ENCODE measurements at regions of chr16 and their contacts with region 1.

Region 1: DNA sequence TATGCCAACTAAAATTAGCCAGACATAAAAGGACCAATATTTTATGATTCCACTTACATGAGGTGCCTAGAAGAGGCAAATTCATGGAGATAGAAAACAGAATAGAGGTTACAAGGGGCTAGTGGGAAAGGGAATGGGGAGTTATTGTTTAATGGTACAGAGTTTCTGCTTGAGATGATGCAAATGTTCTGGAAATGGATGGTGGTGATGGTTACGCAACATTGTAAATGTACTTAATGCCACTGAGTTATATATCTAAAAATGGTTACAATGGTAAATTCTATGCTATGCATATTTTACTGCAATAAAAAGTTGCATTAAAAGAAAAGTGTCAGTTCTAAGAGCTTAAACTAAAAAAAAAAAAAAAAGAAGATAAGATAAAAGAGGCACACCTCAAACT is 17.9 kb downstream of the MT1X start:
- DNase-seq: no peak
- H3K4me3 Mint-ChIP-seq: no peak overlapping the region
- H3K27ac Mint-ChIP-seq: no peak overlapping the region
- H3K4me1 Mint-ChIP-seq: peaks cover 7% of the 10 kb centered on the region
- H3K27me3 Mint-ChIP-seq: no peaks in the 10 kb centered on the region

Region 2: DNA sequence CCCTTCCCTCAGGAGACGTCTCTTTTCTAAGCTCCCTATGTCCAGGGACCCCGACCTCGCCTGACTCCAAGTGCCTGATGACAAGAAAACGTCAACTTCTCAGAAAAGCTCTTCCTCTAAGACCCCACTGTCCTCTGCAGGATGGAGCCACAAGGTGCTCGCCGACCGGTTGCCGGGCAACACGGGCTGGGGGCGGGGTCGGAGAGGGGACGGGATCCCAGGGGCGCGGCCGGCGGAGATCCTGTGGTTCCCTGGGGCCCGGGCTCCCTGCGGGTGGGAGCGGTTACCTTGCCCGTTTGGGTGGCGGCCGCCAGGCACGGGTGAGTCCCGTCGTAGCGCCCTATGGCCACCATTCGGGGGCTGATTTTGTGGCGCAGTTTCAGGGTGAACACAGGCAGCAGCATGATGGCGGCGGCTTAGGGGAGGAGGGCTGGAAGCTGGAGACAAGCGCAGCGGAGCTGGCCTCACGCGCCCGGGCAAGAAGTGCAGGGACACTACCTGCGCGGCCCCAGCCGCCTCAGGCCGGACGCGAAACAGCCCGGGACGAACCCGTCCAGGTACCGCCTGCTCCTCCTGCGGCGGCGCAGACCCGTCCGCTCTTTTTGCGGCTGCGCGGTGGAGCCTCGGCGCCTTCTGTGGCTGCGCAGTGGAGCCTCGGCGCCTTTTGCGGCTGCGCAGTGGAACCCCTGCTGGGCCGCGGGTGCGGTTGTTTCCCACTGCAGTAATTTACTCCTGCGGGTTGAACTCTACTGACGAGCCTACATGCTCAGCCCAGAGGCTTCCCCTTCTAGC is 180.5 kb before region 1 on chr16 and contains the start of gene BBS2:
- CTCF ChIA-PET with region 1: interaction called, 34 read pairs
- POLR2A ChIA-PET with region 1: no interaction called
- intact Hi-C with region 1: loop called (anchors 1 kb)
- DNase-seq: peak; percentile 93
- H3K4me3 Mint-ChIP-seq: peak within 1 kb of the TSS; percentile 79
- H3K27ac Mint-ChIP-seq: peak within 1 kb of the TSS; percentile 80
- H3K4me1 Mint-ChIP-seq: peaks cover 40% of the 10 kb centered on the region
- H3K27me3 Mint-ChIP-seq: no peaks in the 10 kb centered on the region
- total RNA-seq, gene BBS2: 21.5 to 22.6 TPM

Region 3: GRCh38 chr16:56569801-56570370 is 130.3 kb before region 1 on chr16:
- CTCF ChIA-PET with region 1: interaction called, 140 read pairs
- POLR2A ChIA-PET with region 1: no interaction called
- intact Hi-C with region 1: no loop called
- DNase-seq: no peak
- H3K4me3 Mint-ChIP-seq: no peak overlapping the region
- H3K27ac Mint-ChIP-seq: no peak overlapping the region
- H3K4me1 Mint-ChIP-seq: no peaks in the 10 kb centered on the region
- H3K27me3 Mint-ChIP-seq: no peaks in the 10 kb centered on the region

Region 4: DNA sequence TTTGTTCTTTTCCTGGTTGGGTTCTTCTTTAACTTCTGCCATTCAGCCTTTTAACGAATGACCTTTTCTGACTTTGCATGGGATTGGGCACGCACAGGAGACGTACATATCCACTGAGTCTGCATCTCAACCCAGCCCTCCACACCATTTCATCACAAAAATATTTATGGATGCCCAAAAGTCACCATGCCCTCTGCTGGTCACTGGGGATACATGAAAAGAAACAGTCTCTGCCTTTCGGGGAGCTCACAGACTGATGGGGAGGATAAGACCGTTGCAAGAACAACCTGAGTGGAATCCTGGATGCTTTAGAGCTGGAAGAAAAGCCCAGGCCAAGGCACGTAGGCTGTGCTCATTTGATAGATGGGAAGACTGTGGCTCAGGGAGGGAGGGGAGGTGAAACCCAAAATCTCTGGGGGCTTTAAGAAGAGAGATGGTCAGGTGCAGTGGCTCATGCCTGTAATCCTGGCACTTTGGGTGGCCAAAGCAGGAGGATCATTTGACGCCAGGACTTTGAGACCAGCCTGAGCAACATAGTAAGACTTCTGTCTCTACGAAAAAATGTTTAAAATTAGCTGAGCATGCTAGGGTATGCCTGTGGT is 99.7 kb before region 1 on chr16:
- CTCF ChIA-PET with region 1: interaction called, 22 read pairs
- POLR2A ChIA-PET with region 1: interaction called, 4 read pairs
- intact Hi-C with region 1: loop called (anchors 1 kb)
- DNase-seq: peak; percentile 37
- H3K4me3 Mint-ChIP-seq: no peak overlapping the region
- H3K27ac Mint-ChIP-seq: no peak overlapping the region
- H3K4me1 Mint-ChIP-seq: peaks cover 9% of the 10 kb centered on the region
- H3K27me3 Mint-ChIP-seq: peaks cover 6% of the 10 kb centered on the region

Region 5: DNA sequence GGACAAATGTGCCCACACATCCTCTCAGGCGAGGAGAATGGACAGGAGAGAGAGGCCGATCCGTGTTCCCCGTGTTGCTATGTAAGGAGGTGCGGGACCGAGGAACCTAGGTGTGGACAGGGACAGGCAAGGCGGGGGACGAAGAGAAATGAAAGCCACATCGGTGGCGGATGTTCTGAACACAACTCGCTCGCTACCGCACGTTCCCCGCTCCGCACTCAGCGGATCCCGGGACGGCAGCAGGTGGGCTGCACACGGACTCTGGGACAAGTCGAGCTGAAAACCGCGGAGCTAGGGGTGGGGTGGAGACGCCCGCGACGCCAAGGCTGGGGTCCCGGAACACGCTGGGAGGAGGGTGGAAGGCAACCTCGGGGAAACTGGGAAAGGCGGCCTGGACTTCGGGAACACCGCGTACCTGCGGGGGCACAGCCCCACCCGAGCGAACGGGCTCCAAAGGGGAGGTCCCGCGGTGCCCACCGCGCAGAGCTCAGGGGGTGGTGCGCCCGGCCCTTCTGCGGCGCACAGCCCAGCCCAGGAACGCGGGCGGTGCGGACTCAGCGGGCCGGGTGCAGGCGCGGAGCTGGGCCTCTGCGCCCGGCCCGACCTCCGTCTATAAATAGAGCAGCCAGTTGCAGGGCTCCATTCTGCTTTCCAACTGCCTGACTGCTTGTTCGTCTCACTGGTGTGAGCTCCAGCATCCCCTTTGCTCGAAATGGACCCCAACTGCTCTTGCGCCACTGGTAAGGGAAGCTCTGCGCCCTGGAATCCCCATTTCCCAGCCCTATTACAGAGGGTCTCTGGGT is 74.9 kb before region 1 on chr16 and contains the start of gene MT1E:
- CTCF ChIA-PET with region 1: interaction called, 11 read pairs
- POLR2A ChIA-PET with region 1: no interaction called
- intact Hi-C with region 1: no loop called
- DNase-seq: peak; percentile 62
- H3K4me3 Mint-ChIP-seq: peak within 1 kb of the TSS; percentile 78
- H3K27ac Mint-ChIP-seq: no peak within 1 kb of the TSS
- H3K4me1 Mint-ChIP-seq: peaks cover 12% of the 10 kb centered on the region
- H3K27me3 Mint-ChIP-seq: peaks cover 21% of the 10 kb centered on the region
- total RNA-seq, gene MT1E: 4.4 to 4.8 TPM

Region 6: GRCh38 chr16:56673921-56674320 is 26.3 kb before region 1 on chr16:
- CTCF ChIA-PET with region 1: interaction called, 16 read pairs
- POLR2A ChIA-PET with region 1: no interaction called
- intact Hi-C with region 1: loop called (anchors 1 kb)
- DNase-seq: peak; percentile 50
- H3K4me3 Mint-ChIP-seq: no peak overlapping the region
- H3K27ac Mint-ChIP-seq: no peak overlapping the region
- H3K4me1 Mint-ChIP-seq: peaks cover 18% of the 10 kb centered on the region
- H3K27me3 Mint-ChIP-seq: peaks cover 39% of the 10 kb centered on the region

Region 7: DNA sequence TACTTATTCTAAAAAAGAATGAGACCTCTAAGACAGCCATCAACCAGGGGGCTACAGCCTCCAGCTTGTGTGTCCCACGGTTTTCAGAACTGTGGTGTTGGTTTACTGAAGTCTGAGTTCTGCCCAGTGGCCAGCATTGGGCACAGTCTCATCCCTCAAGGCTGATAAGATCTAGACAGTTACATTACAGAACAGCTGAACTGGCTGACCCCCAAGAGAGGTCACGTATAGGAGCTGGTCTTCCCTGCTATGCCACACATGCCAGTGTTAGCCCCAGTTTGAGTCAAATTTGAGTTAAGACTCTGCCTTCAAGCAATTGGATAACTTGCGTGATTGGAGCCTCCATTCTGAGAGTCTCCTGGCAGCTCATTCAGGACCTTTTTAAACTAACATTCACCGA is 14.9 kb after region 1 on chr16:
- CTCF ChIA-PET with region 1: interaction called, 12 read pairs
- POLR2A ChIA-PET with region 1: no interaction called
- intact Hi-C with region 1: no loop called
- DNase-seq: no peak
- H3K4me3 Mint-ChIP-seq: no peak overlapping the region
- H3K27ac Mint-ChIP-seq: no peak overlapping the region
- H3K4me1 Mint-ChIP-seq: no peaks in the 10 kb centered on the region
- H3K27me3 Mint-ChIP-seq: no peaks in the 10 kb centered on the region

Region 8: DNA sequence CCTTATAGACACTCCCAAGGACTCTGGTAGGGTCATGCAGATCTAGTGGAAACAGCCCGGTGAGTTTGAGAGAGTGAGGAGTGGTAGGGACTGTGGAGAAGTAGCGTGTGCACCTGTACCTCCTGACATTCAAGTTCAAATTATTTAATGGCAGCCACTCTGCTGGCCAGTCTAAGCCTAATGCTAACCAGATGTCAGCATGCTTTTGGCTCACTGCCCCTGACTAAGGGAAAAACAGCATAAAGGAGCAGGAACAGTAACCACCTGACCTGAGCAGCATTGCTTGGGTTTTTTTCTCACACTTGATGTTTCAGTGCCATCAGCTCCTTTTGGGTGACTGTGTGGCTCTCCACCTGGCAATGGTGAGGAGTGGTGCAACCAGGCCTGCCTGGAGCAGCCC is 141.0 kb after region 1 on chr16:
- CTCF ChIA-PET with region 1: no interaction called
- POLR2A ChIA-PET with region 1: no interaction called
- intact Hi-C with region 1: no loop called
- DNase-seq: no peak
- H3K4me3 Mint-ChIP-seq: no peak overlapping the region
- H3K27ac Mint-ChIP-seq: no peak overlapping the region
- H3K4me1 Mint-ChIP-seq: peaks cover 5% of the 10 kb centered on the region
- H3K27me3 Mint-ChIP-seq: no peaks in the 10 kb centered on the region